CD8-positive, alpha-beta T cell (primary cell): ENCODE measurements at regions of chr7 and their contacts with region 1.

Region 1: GRCh38 chr7:118183786-118184564 is at the start of gene LSM8:
- DNase-seq: peak; percentile 95 to 99 (median 97)
- ATAC-seq: peak; percentile 96
- H3K4me3 ChIP-seq: peak within 1 kb of the TSS; percentile 79 to 84
- H3K4me3 Mint-ChIP-seq: peak within 1 kb of the TSS; percentile 98
- H3K27ac ChIP-seq: peak within 1 kb of the TSS; percentile 94 to 95
- H3K27ac Mint-ChIP-seq: peak within 1 kb of the TSS; percentile 100
- H3K4me1 ChIP-seq: peaks cover 42% of the 10 kb centered on the region
- H3K4me1 Mint-ChIP-seq: peaks cover 47% of the 10 kb centered on the region
- H3K27me3 ChIP-seq: no peaks in the 10 kb centered on the region
- H3K27me3 Mint-ChIP-seq: no peaks in the 10 kb centered on the region
- CTCF ChIP-seq: no peak
- total RNA-seq, gene LSM8: 47.2 to 48.4 TPM

Region 2: DNA sequence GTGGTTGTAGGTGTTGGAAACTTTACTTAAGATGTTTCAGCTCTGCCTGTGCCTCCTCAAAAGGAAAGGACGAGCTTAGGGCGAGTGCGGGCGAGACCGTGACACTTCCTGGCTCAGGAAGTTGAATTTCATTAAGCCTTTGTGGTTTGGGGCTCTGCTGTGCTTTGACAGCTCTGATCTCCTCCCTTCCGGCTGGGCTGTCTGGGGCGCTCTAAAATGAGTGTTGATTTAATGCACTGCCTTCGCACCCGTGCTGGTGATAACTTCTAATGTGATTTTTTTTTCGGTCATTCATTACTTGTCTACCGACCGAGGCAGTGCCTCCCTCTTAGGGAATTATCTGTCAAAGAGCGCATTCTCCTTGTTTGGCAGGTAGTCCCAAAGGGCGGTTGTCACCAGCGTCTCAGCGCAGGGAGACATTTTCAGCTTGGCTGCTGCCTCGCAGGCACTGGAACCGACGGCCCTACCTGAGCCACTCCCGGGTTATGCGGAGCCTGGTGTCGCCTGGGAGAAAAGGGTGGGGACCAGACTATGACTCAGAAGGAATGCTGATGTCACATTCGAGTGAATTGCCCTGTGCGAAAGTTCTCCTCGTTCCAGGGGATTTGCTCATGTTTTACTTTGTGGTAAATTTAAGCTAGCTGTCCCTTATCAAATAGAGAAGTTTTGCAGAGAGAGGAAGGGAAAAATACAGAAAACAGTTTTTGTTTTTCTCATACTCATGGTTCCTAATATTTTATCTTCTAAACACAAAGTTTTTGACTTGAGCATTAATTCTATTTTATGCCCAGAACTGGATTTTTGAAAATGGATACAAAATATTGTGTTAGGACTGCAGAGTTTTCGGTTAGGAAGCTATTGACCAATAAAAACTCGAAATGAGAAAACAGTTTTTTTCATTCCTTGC is 1972.7 kb before region 1 on chr7:
- CTCF ChIA-PET with region 1: no interaction called
- POLR2A ChIA-PET with region 1: no interaction called
- intact Hi-C with region 1: loop called in 1 of 2 experiments (anchors 10 kb)
- DNase-seq: peak; percentile 62 to 94 (median 83)
- ATAC-seq: peak; percentile 77
- H3K4me3 ChIP-seq: peak overlapping the region; percentile 71 to 86
- H3K4me3 Mint-ChIP-seq: peak overlapping the region; percentile 98
- H3K27ac ChIP-seq: peak overlapping the region; percentile 91 to 93
- H3K27ac Mint-ChIP-seq: peak overlapping the region; percentile 99
- H3K4me1 ChIP-seq: peaks cover 50% of the 10 kb centered on the region
- H3K4me1 Mint-ChIP-seq: peaks cover 57% of the 10 kb centered on the region
- H3K27me3 ChIP-seq: no peaks in the 10 kb centered on the region
- H3K27me3 Mint-ChIP-seq: no peaks in the 10 kb centered on the region
- CTCF ChIP-seq: no peak

Region 3: GRCh38 chr7:116525913-116526861 is 1657.8 kb before region 1 on chr7:
- CTCF ChIA-PET with region 1: no interaction called
- POLR2A ChIA-PET with region 1: no interaction called
- intact Hi-C with region 1: loop called in 1 of 2 experiments (anchors 10 kb)
- DNase-seq: peak; percentile 19 to 80 (median 59)
- ATAC-seq: peak; percentile 92
- H3K4me3 ChIP-seq: peak overlapping the region; percentile 59 to 67
- H3K4me3 Mint-ChIP-seq: peak overlapping the region; percentile 83
- H3K27ac ChIP-seq: no peak overlapping the region
- H3K27ac Mint-ChIP-seq: no peak overlapping the region
- H3K4me1 ChIP-seq: peaks cover 21% of the 10 kb centered on the region
- H3K4me1 Mint-ChIP-seq: peaks cover 25% of the 10 kb centered on the region
- H3K27me3 ChIP-seq: peaks cover 15 to 31% of the 10 kb centered on the region in 2 experiments
- H3K27me3 Mint-ChIP-seq: peaks cover 60% of the 10 kb centered on the region
- CTCF ChIP-seq: peak; percentile 59

Region 4: GRCh38 chr7:116862234-116862950 is 1321.6 kb before region 1 on chr7 and contains the start of gene CAPZA2:
- CTCF ChIA-PET with region 1: no interaction called
- POLR2A ChIA-PET with region 1: no interaction called
- intact Hi-C with region 1: loop called in 1 of 2 experiments (anchors 2 kb)
- DNase-seq: peak; percentile 88 to 97 (median 95)
- ATAC-seq: peak; percentile 89
- H3K4me3 ChIP-seq: peak within 1 kb of the TSS; percentile 73 to 79
- H3K4me3 Mint-ChIP-seq: peak within 1 kb of the TSS; percentile 96
- H3K27ac ChIP-seq: peak within 1 kb of the TSS; percentile 77 to 82
- H3K27ac Mint-ChIP-seq: peak within 1 kb of the TSS; percentile 96
- H3K4me1 ChIP-seq: peaks cover 15% of the 10 kb centered on the region
- H3K4me1 Mint-ChIP-seq: peaks cover 44% of the 10 kb centered on the region
- H3K27me3 ChIP-seq: no peaks in the 10 kb centered on the region
- H3K27me3 Mint-ChIP-seq: peaks cover 7% of the 10 kb centered on the region
- CTCF ChIP-seq: peak; percentile 42
- total RNA-seq, gene CAPZA2: 92.6 to 101 TPM

Region 5: GRCh38 chr7:116953727-116954442 is 1230.1 kb before region 1 on chr7:
- CTCF ChIA-PET with region 1: no interaction called
- POLR2A ChIA-PET with region 1: no interaction called
- intact Hi-C with region 1: loop called in 1 of 2 experiments (anchors 10 kb)
- DNase-seq: peak in 7 of 9 experiments; percentile 1 to 80 (median 35)
- ATAC-seq: peak; percentile 69
- H3K4me3 ChIP-seq: peak overlapping the region; percentile 61 to 75
- H3K4me3 Mint-ChIP-seq: peak overlapping the region; percentile 93
- H3K27ac ChIP-seq: peak overlapping the region; percentile 49 to 69
- H3K27ac Mint-ChIP-seq: peak overlapping the region; percentile 83
- H3K4me1 ChIP-seq: peaks cover 15% of the 10 kb centered on the region
- H3K4me1 Mint-ChIP-seq: peaks cover 21% of the 10 kb centered on the region
- H3K27me3 ChIP-seq: no peaks in the 10 kb centered on the region
- H3K27me3 Mint-ChIP-seq: no peaks in the 10 kb centered on the region
- CTCF ChIP-seq: no peak

Region 6: DNA sequence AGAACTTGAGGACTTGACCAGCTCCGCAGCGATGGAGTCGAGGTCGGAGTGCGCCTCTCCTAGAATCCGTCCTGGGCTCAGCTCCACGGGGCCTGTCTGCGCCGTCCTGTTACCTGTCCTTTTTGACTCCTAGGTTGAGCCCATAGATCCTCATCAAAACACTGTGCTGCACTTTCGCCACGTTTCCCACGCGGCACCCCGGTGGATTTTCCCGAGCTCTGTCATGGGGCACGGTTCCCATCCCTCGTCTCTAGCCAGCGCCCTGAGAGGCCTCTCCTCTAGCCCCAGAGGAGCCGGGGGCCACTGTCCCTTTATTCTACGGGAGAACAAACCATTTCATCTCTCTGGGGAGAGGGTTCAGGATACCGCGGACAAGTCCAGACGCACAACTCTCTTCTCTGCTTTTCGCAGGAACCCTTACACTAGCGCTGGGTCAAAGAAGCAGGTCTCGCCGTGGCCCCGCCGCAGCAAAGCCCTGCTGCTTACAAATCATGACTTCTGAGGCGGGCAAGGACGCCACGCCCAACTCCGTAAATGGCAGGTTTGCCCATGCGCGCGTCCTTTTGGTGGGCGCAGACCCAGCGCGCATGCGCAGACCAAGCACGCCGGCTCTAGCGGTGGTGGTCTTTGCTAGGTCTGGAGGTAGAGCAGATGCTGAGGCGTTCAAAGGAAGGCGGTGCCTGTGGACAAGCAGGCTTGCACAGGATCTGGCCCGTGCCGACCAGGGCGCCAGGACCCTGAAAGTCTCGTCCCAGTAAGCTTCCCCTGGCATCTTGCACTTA is 30.3 kb after region 1 on chr7:
- CTCF ChIA-PET with region 1: no interaction called
- POLR2A ChIA-PET with region 1: no interaction called
- intact Hi-C with region 1: loop called (anchors 1 to 5 kb)
- DNase-seq: peak; percentile 63 to 91 (median 81)
- ATAC-seq: peak; percentile 96
- H3K4me3 ChIP-seq: peak overlapping the region; percentile 55 to 58
- H3K4me3 Mint-ChIP-seq: peak overlapping the region; percentile 94
- H3K27ac ChIP-seq: peak overlapping the region in 1 of 2 experiments; percentile 31
- H3K27ac Mint-ChIP-seq: peak overlapping the region; percentile 87
- H3K4me1 ChIP-seq: peaks cover 5% of the 10 kb centered on the region
- H3K4me1 Mint-ChIP-seq: peaks cover 18% of the 10 kb centered on the region
- H3K27me3 ChIP-seq: no peaks in the 10 kb centered on the region
- H3K27me3 Mint-ChIP-seq: peaks cover 2% of the 10 kb centered on the region
- CTCF ChIP-seq: no peak